ENCODE measurements at regions of chr2 and their contacts with region 1.

Region 1: DNA sequence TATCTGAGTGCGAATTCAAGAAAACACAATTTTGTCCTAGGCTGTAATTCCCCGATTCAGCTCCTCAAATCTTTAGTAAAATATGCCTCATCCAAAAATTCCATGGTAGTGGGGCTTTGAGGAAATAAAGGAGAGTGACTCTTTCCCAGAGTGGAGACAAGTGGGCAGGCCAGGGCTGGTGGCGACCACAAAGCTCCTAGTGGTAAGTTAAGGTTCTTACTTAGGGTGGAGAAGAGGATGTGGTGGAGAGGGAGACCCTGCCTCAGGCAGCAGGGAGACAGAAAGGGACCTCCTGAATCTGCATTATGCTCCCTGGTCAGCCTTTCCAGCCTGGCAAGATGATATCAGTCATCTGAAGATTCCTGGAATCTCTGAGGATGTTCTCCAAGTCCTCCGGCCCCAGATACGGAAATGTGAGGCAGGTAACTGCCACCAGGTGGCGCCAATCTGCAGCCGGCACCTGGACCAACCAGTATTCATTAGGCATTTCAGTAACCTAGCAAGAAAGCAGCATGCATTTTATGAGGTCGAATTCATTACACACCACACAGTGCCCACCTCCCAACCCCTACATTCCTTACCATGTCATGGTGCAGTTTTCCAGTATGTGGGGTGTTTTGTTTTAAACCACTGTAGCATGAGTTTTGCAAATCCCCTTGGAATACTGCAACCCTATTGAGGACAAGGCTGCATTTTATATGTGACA is 106.4 kb downstream of the POLE4 start:
- DNase-seq: peak in 2 of 3 donors; percentile 74 to 77
- ATAC-seq: peak; percentile 77
- H3K4me3 ChIP-seq: no peak overlapping the region
- H3K4me1 ChIP-seq: no peaks in the 10 kb centered on the region
- CTCF ChIP-seq: peak; percentile 72

Region 2: DNA sequence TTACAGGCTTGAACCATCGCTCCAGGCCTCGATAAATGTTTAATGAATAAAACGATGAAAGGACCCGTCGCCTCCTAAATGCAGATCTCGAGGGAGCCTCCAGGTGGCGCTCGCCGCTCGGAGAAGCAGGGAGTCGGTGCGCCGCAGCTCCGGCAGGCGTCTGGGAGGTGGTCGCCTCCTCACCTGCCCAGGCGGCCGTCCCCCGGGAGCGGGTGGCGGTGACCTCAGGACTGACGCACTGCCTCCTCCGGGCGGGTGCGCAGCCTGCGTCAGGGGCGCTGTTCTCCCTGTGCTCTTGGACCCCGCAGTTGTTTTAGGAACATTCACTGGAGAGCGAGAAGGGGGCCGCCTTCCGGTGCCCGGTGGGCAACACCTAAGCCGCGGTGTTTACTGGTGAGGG is 145.0 kb before region 1 on chr2:
- intact Hi-C with region 1: loop called in 1 of 2 experiments (anchors 10 kb)
- DNase-seq: peak; percentile 70 to 81 (median 72)
- ATAC-seq: peak; percentile 80
- H3K4me3 ChIP-seq: no peak overlapping the region
- H3K4me1 ChIP-seq: no peaks in the 10 kb centered on the region
- CTCF ChIP-seq: peak; percentile 68

Region 3: GRCh38 chr2:75018162-75018561 is 46.7 kb before region 1 on chr2:
- intact Hi-C with region 1: no loop called
- DNase-seq: peak in 1 of 3 donors; percentile 21
- ATAC-seq: no peak
- H3K4me3 ChIP-seq: no peak overlapping the region
- H3K4me1 ChIP-seq: no peaks in the 10 kb centered on the region
- CTCF ChIP-seq: no peak

Region 4: GRCh38 chr2:75390169-75390568 is 325.3 kb after region 1 on chr2:
- intact Hi-C with region 1: no loop called
- DNase-seq: no peak
- ATAC-seq: no peak
- H3K4me3 ChIP-seq: no peak overlapping the region
- H3K4me1 ChIP-seq: no peaks in the 10 kb centered on the region
- CTCF ChIP-seq: no peak

Region 5: GRCh38 chr2:75403991-75404428 is 339.2 kb after region 1 on chr2:
- intact Hi-C with region 1: loop called in 1 of 2 experiments (anchors 10 kb)
- DNase-seq: no peak
- ATAC-seq: peak; percentile 55
- H3K4me3 ChIP-seq: no peak overlapping the region
- H3K4me1 ChIP-seq: no peaks in the 10 kb centered on the region
- CTCF ChIP-seq: peak; percentile 42

Region 6: GRCh38 chr2:75949385-75950030 is 884.7 kb after region 1 on chr2:
- intact Hi-C with region 1: no loop called
- DNase-seq: no peak
- ATAC-seq: no peak
- H3K4me3 ChIP-seq: no peak overlapping the region
- H3K4me1 ChIP-seq: no peaks in the 10 kb centered on the region
- CTCF ChIP-seq: no peak

Measured in mucosa of descending colon (tissue), 3 donors.